T-cell (primary cell): ENCODE measurements at regions of chr14 and their contacts with region 1.

Region 1: DNA sequence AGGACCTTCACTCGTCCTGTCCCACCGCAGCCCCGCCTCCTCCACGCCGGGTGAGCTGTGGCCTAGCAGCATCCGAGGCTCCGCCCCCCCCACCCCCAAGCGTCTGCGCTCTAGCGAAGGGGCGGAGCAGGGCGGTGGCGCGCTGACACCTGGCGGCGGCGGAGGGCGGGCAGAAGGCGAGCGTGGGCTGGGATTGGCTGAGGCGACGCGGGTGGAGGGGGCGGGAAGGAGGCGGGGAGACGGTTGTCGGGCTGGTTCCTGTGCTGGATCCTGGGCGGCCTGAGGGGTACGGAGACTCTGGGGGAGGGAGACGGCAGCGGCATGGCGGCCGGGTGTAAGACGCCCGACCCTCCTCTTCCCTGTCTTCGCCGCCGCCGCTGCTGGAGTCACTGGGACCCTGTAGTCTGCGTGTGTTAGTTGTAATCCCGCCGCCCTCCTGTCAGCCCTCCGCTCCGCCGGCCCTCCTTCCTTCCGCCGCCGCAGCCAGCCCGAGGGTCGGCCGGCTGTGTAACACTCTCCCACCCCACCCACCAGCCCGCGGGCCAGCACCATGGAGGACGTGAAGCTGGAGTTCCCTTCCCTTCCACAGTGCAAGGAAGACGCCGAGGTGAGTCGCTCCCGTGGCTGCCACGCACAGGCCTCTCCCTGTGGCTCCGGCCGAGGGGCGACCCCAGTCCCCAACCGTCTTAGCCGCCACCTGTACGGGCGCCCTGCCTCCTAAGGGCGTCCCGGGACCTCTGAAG is at the start of gene STYX:
- DNase-seq: peak; percentile 91 to 99 (median 97)
- ATAC-seq: peak; percentile 93 to 99 (median 96)
- H3K4me3 ChIP-seq: peak within 1 kb of the TSS; percentile 76 to 100
- H3K4me3 Mint-ChIP-seq: peak within 1 kb of the TSS; percentile 92 to 93 (median 92)
- H3K27ac ChIP-seq: peak within 1 kb of the TSS; percentile 78
- H3K27ac Mint-ChIP-seq: peak within 1 kb of the TSS; percentile 89
- H3K4me1 ChIP-seq: peaks cover 4 to 21% of the 10 kb centered on the region in 2 experiments
- H3K4me1 Mint-ChIP-seq: peaks cover 38 to 41% (median 40%) of the 10 kb centered on the region in 3 donors
- H3K27me3 ChIP-seq: no peaks in the 10 kb centered on the region
- H3K27me3 Mint-ChIP-seq: no peaks in the 10 kb centered on the region
- total RNA-seq, gene STYX: 29.6 to 40.0 (median 36.9) TPM

Region 2: DNA sequence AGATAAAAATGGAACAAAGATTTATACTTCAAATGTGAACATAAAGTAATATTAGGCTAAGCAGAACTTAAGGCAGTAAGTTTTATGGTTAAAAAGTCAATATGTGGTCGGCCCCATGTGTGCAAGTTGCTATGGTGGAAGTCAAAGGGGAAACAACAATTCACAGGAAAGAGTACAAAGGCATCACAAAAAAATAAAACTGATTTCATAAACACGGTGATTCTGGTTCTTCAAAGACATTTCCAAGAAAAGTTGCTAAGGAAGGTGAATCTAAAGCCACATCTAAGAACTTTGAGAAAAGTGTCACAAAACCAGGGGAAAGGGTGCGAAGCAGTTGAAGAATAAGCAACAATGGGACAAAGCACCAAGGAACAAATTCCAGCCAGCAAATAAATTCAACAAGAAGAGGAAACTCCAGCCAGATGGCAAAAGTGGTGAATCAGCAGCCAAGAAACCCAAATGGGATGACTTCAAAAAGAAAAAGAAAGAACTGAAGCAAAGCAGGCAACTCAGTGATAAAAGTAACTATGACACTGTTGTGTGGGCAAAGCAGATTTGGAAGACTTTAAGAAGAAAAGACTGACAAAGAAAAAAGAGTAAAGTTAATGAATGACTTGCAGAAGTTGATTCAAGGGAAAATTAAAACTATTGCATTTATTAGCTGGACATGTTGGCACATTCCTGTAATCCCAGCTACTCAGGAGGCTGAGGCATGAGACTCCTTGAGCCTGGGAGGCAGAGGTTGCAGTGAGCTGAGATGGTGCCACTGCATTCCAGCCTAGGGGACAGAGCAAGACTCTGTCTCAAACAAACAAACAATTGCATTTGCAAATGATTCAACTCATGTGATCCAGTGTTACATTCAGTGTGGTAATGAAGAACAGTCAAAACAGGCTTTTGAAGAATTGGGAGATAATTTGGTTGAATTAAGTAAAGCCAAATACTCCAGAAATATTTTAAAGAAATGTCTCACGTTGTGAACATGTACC is 443.1 kb before region 1 on chr14:
- CTCF ChIA-PET with region 1: no interaction called
- POLR2A ChIA-PET with region 1: interaction called in 1 of 2 experiments, 14 read pairs
- DNase-seq: no peak
- ATAC-seq: peak; percentile 45 to 74 (median 71)
- H3K4me3 ChIP-seq: peak overlapping the region in 1 of 2 donors; percentile 6
- H3K4me3 Mint-ChIP-seq: peak overlapping the region; percentile 1 to 64 (median 4)
- H3K27ac ChIP-seq: no peak overlapping the region
- H3K27ac Mint-ChIP-seq: peak overlapping the region; percentile 52 to 69
- H3K4me1 ChIP-seq: peaks cover 19 to 27% of the 10 kb centered on the region in 2 experiments
- H3K4me1 Mint-ChIP-seq: peaks cover 33 to 45% (median 43%) of the 10 kb centered on the region in 3 donors
- H3K27me3 ChIP-seq: no peaks in the 10 kb centered on the region
- H3K27me3 Mint-ChIP-seq: no peaks in the 10 kb centered on the region

Region 3: GRCh38 chr14:52741865-52742264 is 11.8 kb after region 1 on chr14:
- CTCF ChIA-PET with region 1: interaction called in 1 of 2 experiments, 5 read pairs
- POLR2A ChIA-PET with region 1: interaction called in 1 of 2 experiments, 13 read pairs
- DNase-seq: peak in 3 of 35 experiments; percentile 2 to 55 (median 21)
- ATAC-seq: peak; percentile 65 to 76 (median 71)
- H3K4me3 ChIP-seq: peak overlapping the region; percentile 24 to 33
- H3K4me3 Mint-ChIP-seq: peak overlapping the region; percentile 69 to 82 (median 72)
- H3K27ac ChIP-seq: peak overlapping the region; percentile 93
- H3K27ac Mint-ChIP-seq: peak overlapping the region; percentile 98 to 99
- H3K4me1 ChIP-seq: peaks cover 39% of the 10 kb centered on the region in 2 experiments
- H3K4me1 Mint-ChIP-seq: peaks cover 77 to 86% (median 82%) of the 10 kb centered on the region in 3 donors
- H3K27me3 ChIP-seq: no peaks in the 10 kb centered on the region
- H3K27me3 Mint-ChIP-seq: no peaks in the 10 kb centered on the region

Region 4: DNA sequence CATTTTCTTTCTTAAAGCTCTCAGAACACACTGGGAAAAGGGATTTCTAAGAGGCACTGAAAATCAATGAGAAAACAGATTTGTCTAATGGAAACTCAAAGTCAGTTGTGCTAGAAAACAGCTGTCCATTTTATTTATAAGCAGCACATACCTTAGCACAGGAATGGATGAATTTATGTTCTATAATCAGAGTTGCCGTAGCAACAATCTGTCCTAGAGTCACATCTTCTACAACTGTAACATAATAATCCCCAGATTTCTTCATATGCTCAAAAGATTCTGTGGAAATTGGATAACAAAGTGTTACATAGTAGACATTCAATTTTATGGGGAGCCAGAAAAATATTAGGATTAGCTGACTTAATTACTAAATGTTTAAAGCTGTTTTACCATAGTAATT is 51.5 kb after region 1 on chr14:
- CTCF ChIA-PET with region 1: interaction called, 4 to 7 read pairs
- POLR2A ChIA-PET with region 1: interaction called in 1 of 2 experiments, 11 read pairs
- DNase-seq: no peak
- ATAC-seq: no peak
- H3K4me3 ChIP-seq: no peak overlapping the region
- H3K4me3 Mint-ChIP-seq: no peak overlapping the region
- H3K27ac ChIP-seq: no peak overlapping the region
- H3K27ac Mint-ChIP-seq: peak overlapping the region in 1 of 2 donors; percentile 61
- H3K4me1 ChIP-seq: no peaks in the 10 kb centered on the region
- H3K4me1 Mint-ChIP-seq: peaks cover 0 to 2% (median 2%) of the 10 kb centered on the region in 3 donors
- H3K27me3 ChIP-seq: no peaks in the 10 kb centered on the region
- H3K27me3 Mint-ChIP-seq: no peaks in the 10 kb centered on the region